ENCODE measurements at regions of chr2 and their contacts with region 1.

Region 1: DNA sequence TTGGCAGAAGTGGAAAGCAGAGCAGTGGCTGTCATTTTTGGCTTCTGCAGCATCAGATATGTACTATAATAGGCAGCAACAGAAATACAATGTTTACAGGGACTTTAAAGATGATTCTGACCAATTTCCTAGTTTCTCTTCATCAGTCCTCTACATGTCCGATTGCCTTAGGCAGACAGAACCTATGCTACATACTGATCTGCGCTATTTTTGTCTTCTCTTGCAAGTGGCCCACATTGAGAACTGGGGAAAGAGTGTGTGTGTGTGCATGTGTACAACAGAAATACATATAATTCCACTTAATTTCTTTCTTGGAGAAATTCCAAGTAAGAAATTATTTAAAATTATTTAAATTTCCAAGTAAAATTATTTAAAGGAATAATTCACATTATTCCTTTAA is 77.1 kb upstream of the CHRNA1 start:
- DNase-seq: no peak
- H3K4me3 ChIP-seq: no peak overlapping the region
- H3K27ac ChIP-seq: no peak overlapping the region
- H3K4me1 ChIP-seq: no peaks in the 10 kb centered on the region
- H3K27me3 ChIP-seq: no peaks in the 10 kb centered on the region
- CTCF ChIP-seq: no peak
- EP300 ChIP-seq: no peak
- POLR2A ChIP-seq: no peak

Region 2: DNA sequence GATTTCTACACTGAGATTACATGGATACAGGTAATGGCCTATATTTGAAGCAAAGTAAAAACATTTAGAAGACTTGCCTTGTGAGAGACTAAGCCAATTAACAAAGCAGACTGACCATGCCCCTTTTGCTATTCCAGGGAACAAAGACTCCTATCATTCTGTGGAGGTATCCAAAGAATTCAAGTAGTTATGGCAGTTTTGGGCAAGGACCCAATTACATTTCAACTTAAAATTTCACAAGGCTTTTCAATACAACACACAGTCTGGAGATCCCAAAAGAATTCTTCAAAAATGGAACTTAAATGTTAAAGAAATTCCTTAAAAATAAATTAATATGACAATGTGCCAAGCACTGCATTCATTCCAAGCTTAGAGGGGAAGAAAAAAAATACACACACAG is 32.1 kb after region 1 on chr2:
- in situ Hi-C with region 1: no loop called
- intact Hi-C with region 1: loop called (anchors 1 kb)
- DNase-seq: no peak
- H3K4me3 ChIP-seq: no peak overlapping the region
- H3K27ac ChIP-seq: no peak overlapping the region
- H3K4me1 ChIP-seq: no peaks in the 10 kb centered on the region
- H3K27me3 ChIP-seq: no peaks in the 10 kb centered on the region
- CTCF ChIP-seq: no peak
- EP300 ChIP-seq: no peak
- POLR2A ChIP-seq: no peak

Region 3: GRCh38 chr2:174939046-174939445 is 97.7 kb after region 1 on chr2:
- in situ Hi-C with region 1: no loop called
- intact Hi-C with region 1: no loop called
- DNase-seq: no peak
- H3K4me3 ChIP-seq: no peak overlapping the region
- H3K27ac ChIP-seq: no peak overlapping the region
- H3K4me1 ChIP-seq: no peaks in the 10 kb centered on the region
- H3K27me3 ChIP-seq: no peaks in the 10 kb centered on the region
- CTCF ChIP-seq: no peak
- EP300 ChIP-seq: no peak
- POLR2A ChIP-seq: no peak